Heart left ventricle (tissue), 16 donors: ENCODE measurements at regions of chr4 and their contacts with region 1.

Region 1: DNA sequence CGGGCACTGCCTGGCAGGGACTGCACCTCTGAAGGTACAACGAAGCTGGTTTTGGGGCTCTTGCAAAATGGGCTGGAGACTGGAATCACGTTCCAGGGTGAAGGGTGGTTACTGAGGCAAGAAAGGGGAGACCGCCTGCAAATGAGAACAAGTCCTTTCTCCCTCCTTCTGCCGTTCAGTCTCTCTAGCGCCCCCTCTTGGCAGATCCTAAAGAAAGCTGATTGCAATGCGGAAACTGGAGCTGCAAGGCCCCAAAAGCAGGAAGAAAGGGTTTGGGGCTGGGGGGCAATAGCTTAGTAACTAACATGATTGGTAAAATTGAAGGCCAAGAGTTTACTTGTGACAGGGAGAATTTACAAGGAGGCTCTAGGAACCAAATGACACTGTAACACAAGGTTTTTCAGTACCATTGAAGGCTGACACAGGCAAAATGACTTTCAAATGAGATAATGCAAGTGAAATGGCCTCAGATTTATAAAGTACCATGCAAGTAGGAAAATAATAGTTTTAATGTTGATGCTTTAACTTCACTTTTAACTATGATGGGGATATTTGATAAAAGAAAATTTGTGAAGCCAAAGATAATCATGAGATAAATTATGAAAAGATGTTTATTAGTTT is 222.7 kb upstream of the HAND2 start:
- DNase-seq: no peak
- ATAC-seq: no peak
- H3K4me3 ChIP-seq: no peak overlapping the region
- H3K27ac ChIP-seq: no peak overlapping the region
- H3K4me1 ChIP-seq: peaks cover 0 to 6% (median 0%) of the 10 kb centered on the region in 12 donors
- H3K27me3 ChIP-seq: no peaks in the 10 kb centered on the region
- CTCF ChIP-seq: peak in 10 of 12 donors; percentile 11 to 50 (median 42)
- POLR2A ChIP-seq: no peak

Region 2: GRCh38 chr4:173288296-173288695 is 464.4 kb before region 1 on chr4:
- intact Hi-C with region 1: no loop called
- DNase-seq: peak in 4 of 5 donors; percentile 62 to 70 (median 67)
- ATAC-seq: peak; percentile 32 to 73 (median 56)
- H3K4me3 ChIP-seq: peak overlapping the region in 1 of 12 donors; percentile 51
- H3K27ac ChIP-seq: no peak overlapping the region
- H3K4me1 ChIP-seq: peaks cover 0 to 7% (median 0%) of the 10 kb centered on the region in 12 donors
- H3K27me3 ChIP-seq: no peaks in the 10 kb centered on the region
- CTCF ChIP-seq: peak; percentile 50 to 71 (median 61)
- POLR2A ChIP-seq: no peak

Region 3: GRCh38 chr4:173529477-173530325 is 223.0 kb before region 1 on chr4 and contains the start of gene HAND2:
- intact Hi-C with region 1: loop called in 9 of 10 experiments (anchors 2 to 10 kb)
- DNase-seq: peak; percentile 82 to 92 (median 87)
- ATAC-seq: peak; percentile 70 to 76 (median 74)
- H3K4me3 ChIP-seq: peak within 1 kb of the TSS; percentile 60 to 95 (median 82)
- H3K27ac ChIP-seq: peak within 1 kb of the TSS; percentile 83 to 99 (median 96)
- H3K4me1 ChIP-seq: peaks cover 0 to 7% (median 1%) of the 10 kb centered on the region in 12 donors
- H3K27me3 ChIP-seq: peaks cover 0 to 96% (median 11%) of the 10 kb centered on the region in 9 donors
- CTCF ChIP-seq: no peak
- POLR2A ChIP-seq: peak; percentile 87 to 97
- total RNA-seq, gene HAND2: 89.3 to 188 (median 129) TPM

Region 4: GRCh38 chr4:173652283-173652931 is 100.3 kb before region 1 on chr4:
- intact Hi-C with region 1: loop called in 1 of 10 experiments (anchors 10 kb)
- DNase-seq: no peak
- ATAC-seq: peak; percentile 78 to 88 (median 82)
- H3K4me3 ChIP-seq: no peak overlapping the region
- H3K27ac ChIP-seq: peak overlapping the region in 10 of 12 donors; percentile 48 to 77 (median 71)
- H3K4me1 ChIP-seq: peaks cover 0 to 14% (median 2%) of the 10 kb centered on the region in 12 donors
- H3K27me3 ChIP-seq: no peaks in the 10 kb centered on the region
- CTCF ChIP-seq: no peak
- POLR2A ChIP-seq: no peak

Region 5: DNA sequence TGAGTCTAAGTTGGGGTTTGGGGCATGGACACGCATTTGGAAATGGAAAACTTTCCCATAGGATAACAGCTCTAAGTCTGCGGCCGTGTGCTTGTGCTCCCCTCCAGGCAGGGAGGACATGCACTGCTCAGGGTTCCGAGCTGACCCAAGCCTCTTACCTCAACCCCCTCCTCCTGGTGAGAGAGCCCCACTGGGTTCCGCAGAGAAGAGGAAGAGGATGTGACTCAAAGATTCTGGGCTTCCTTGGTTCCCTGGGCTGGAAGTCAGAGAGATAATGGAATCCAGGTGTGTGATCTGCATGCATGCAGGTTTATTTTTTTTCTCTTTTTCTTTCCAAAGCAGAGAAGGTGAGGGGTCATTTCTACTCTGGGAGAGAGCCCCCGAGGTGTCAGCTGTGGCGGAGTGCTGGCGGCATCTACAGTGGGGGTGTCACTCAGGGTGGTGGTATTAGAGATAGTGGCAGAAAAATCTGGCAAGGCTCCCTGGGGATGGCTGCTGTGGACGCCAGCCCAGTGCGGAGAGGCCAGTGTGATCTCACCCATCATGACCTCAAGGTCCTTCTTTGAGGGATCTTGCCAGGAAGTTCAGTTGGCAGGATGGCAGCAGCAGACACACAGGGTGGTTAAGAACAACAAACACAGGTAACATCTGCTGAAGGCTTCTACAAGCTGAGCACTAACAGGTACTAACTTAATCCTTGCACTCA is 54.0 kb before region 1 on chr4:
- intact Hi-C with region 1: loop called in 2 of 10 experiments (anchors 5 kb)
- DNase-seq: peak; percentile 66 to 83 (median 70)
- ATAC-seq: peak; percentile 88 to 94 (median 92)
- H3K4me3 ChIP-seq: peak overlapping the region in 9 of 12 donors; percentile 23 to 50 (median 34)
- H3K27ac ChIP-seq: peak overlapping the region; percentile 43 to 93 (median 74)
- H3K4me1 ChIP-seq: peaks cover 0 to 7% (median 0%) of the 10 kb centered on the region in 12 donors
- H3K27me3 ChIP-seq: no peaks in the 10 kb centered on the region
- CTCF ChIP-seq: no peak
- POLR2A ChIP-seq: peak in 1 of 2 donors; percentile 33

Region 6: GRCh38 chr4:173990126-173990868 is 237.6 kb after region 1 on chr4:
- intact Hi-C with region 1: loop called in 6 of 10 experiments (anchors 5 to 10 kb)
- DNase-seq: no peak
- ATAC-seq: peak; percentile 71 to 87 (median 83)
- H3K4me3 ChIP-seq: peak overlapping the region in 9 of 12 donors; percentile 2 to 37 (median 21)
- H3K27ac ChIP-seq: peak overlapping the region in 11 of 12 donors; percentile 29 to 75 (median 69)
- H3K4me1 ChIP-seq: peaks cover 0 to 19% (median 5%) of the 10 kb centered on the region in 12 donors
- H3K27me3 ChIP-seq: no peaks in the 10 kb centered on the region
- CTCF ChIP-seq: peak; percentile 28 to 66 (median 50)
- POLR2A ChIP-seq: no peak

Region 7: DNA sequence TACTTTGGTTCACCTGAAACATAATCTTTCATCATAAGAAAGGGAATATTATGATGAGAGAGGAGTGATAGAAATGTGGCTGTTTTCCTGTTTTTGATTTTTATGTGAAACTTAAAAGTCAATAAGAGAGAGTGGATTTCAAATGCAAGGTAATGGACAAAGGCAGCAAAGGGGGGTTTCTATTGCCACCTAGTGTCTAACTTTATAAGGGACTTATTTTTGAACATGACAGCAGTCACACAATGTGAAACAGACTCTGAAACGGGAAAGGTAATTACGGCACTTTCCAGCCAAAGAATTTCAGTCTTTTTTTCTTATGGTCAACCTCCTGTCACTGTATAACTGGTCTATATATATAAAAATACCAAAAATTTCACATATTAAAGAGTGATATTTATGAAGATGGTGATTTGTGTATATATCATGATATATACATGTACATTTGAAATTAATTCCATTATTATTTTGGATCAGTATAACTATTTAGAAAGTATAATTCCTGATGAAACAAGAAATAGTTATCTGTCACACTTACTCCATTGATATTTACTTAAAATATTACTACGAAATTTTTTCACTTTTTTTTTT is 403.6 kb after region 1 on chr4:
- intact Hi-C with region 1: loop called in 4 of 10 experiments (anchors 5 to 10 kb)
- DNase-seq: no peak
- ATAC-seq: peak; percentile 72 to 82 (median 78)
- H3K4me3 ChIP-seq: peak overlapping the region in 2 of 12 donors; percentile 13 to 32
- H3K27ac ChIP-seq: peak overlapping the region in 4 of 12 donors; percentile 19 to 79 (median 28)
- H3K4me1 ChIP-seq: peaks cover 0 to 19% (median 0%) of the 10 kb centered on the region in 12 donors
- H3K27me3 ChIP-seq: no peaks in the 10 kb centered on the region
- CTCF ChIP-seq: peak; percentile 46 to 76 (median 62)
- POLR2A ChIP-seq: no peak